Activated CD4-positive, alpha-beta T cell treated with anti-CD3 and anti-CD28 coated beads, Interleukin-2, amount 10 ng/mL, durations not matched to agents 7 days and 5 days (primary cell): ENCODE measurements at regions of chr14 and their contacts with region 1.

Region 1: DNA sequence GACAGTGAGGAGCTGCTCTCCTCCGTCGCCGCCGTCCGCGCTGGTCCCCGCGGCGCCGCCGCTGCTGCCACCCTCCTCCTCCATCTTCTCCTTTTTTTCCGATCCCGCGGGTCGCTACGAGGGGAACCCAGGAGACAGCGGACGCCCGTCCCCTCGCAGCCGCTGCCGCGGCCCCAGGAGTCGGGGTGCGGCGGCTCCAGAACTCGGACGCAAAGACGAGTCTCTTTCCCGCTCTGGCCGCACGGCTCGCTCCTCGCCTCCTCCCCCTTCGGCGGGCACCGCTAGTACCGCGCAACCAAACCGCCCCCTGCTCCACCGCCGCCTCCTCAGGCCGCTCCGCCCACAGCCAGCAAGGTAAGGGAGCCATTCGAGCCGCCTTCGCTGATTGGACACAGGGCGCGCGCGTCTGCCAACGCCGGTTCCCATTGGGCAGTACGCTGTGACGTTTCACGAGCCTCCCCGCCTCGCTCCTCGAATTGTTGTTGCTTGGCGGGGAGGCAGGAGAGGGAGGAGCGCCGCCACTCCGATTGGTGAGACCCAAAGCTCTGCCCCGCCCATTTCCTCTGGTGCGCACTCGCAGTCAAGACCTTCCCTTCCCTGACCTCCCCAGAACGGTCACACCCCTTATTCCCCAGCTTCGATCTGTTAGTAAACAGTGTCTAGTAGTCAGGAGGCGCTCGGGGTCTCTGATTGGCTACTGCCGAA is at the start of gene RPS6KA5:
- DNase-seq: peak; percentile 100
- H3K4me3 Mint-ChIP-seq: peak within 1 kb of the TSS; percentile 89
- H3K27ac Mint-ChIP-seq: peak within 1 kb of the TSS; percentile 87
- H3K4me1 Mint-ChIP-seq: peaks cover 62% of the 10 kb centered on the region
- H3K27me3 Mint-ChIP-seq: no peaks in the 10 kb centered on the region
- total RNA-seq, gene RPS6KA5: 42.1 to 44.8 TPM

Region 2: DNA sequence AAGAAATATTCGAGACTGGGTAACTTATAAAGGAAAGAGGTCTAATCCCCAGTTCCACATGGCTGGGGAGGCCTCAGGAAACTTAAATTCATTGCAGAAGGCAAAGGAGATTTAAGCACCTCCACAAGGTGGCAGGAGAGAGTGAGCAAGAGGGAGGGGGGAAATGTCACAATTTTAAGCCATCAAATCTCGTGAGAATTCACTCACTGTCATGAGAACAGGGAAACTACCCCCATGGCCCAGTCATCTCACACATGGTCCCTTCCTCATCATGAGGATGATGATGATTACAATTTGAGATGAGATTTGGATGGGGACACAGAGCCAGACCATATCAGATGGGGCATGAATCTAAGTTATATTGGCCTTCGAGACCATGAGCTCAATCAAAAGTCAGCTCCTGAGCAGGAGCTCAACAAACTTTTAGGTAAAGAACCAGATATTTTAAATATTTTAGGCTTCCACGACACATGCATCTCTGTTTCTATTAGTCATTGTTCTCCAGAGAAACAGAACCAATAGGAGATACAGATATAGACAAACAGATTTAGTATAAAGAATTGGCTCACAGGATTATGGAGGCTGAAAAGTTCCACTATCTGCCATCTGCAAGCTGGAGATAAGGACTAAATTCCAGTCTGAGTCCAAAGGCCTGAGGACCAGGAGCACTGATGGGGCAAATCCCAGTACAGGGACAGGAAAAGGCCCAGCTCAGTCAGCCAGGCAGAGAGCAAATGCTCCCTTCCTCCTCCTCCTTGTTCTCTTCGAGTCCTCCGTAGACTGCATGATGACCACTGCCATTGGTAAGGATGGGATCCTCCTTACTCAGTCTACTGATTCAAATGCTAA is 78.2 kb after region 1 on chr14:
- CTCF ChIA-PET with region 1: interaction called, 14 read pairs
- POLR2A ChIA-PET with region 1: no interaction called
- DNase-seq: peak; percentile 62
- H3K4me3 Mint-ChIP-seq: no peak overlapping the region
- H3K27ac Mint-ChIP-seq: peak overlapping the region; percentile 41
- H3K4me1 Mint-ChIP-seq: peaks cover 58% of the 10 kb centered on the region
- H3K27me3 Mint-ChIP-seq: no peaks in the 10 kb centered on the region